ENCODE measurements at regions of chr4 and their contacts with region 1.

Region 1: DNA sequence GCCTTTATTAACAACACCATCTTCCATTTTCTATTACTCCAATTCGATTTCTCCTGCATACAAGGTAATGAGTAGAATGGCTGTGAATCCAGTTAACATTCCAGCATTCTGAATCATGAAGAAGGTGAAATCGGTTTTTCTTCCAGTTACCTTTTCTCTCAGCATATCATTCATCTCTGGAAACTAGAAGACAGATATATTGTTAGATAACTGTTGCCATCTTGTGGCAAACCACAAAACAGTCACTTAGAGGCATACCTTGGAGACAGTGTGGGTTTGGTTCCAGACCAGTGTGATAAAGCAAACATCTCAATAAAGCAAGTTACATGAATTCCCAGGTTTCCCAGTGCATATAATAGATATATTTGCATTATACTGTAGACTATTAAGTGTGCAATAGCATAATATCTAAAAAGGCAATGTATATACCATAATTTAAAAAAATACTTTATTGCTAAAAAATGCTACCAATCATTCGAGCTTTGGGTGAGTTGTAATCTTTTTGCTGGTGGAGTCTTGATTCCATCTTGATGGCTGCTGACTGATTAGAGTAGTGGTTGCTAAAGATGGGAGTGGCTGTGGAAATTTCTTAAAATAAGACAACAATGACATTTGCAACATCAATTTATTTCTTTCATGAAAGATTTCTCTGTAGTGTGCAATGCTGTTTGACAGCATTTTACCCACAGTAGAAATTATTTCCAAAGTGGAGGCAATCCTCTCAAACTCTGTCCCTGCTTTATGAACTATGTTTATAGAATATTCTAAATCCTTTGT is 82.1 kb downstream of the SLC39A8 start:
- DNase-seq: no peak
- ATAC-seq: no peak
- H3K4me3 ChIP-seq: no peak overlapping the region
- H3K27ac ChIP-seq: no peak overlapping the region
- H3K4me1 ChIP-seq: no peaks in the 10 kb centered on the region
- H3K27me3 ChIP-seq: no peaks in the 10 kb centered on the region
- CTCF ChIP-seq: peak in 7 of 9 donors; percentile 23 to 57 (median 42)

Region 2: GRCh38 chr4:101155368-101155767 is 1107.8 kb before region 1 on chr4:
- intact Hi-C with region 1: loop called in 1 of 10 experiments (anchors 10 kb)
- DNase-seq: no peak
- ATAC-seq: peak in 1 of 8 donors; percentile 48
- H3K4me3 ChIP-seq: no peak overlapping the region
- H3K27ac ChIP-seq: no peak overlapping the region
- H3K4me1 ChIP-seq: peaks cover 0 to 26% (median 4%) of the 10 kb centered on the region in 9 donors
- H3K27me3 ChIP-seq: no peaks in the 10 kb centered on the region
- CTCF ChIP-seq: no peak

Measured in heart right ventricle (tissue), 16 donors.